Activated CD8-positive, alpha-beta memory T cell treated with anti-CD3 and anti-CD28 coated beads, Interleukin-2, amount 10 ng/mL, durations not matched to agents 7 days and 5 days (primary cell): ENCODE measurements at regions of chr7 and their contacts with region 1.

Region 1: DNA sequence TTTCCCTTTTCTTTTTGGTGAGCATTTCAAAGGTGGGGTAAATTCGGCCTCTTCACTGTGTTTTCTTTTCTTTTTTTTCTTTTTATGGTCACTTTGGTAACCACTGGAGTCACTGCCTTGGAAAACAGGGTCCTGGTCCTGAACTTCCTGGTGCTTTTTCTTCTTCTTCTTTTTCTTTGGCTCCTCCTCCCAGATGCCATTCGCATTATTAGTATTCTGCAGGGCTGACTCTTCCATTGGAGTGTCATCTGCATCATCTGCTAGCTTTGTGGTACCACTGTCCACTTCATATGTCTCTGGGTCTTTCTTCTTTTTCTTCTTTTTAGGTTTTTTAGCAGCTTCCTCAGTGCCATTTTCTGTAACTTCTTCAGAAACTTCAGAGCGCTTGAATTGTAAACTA is 10.5 kb downstream of the POLR1F start:
- DNase-seq: no peak
- ATAC-seq: no peak
- H3K4me3 Mint-ChIP-seq: no peak overlapping the region
- H3K27ac Mint-ChIP-seq: no peak overlapping the region
- H3K4me1 Mint-ChIP-seq: no peaks in the 10 kb centered on the region
- H3K27me3 Mint-ChIP-seq: no peaks in the 10 kb centered on the region

Region 2: DNA sequence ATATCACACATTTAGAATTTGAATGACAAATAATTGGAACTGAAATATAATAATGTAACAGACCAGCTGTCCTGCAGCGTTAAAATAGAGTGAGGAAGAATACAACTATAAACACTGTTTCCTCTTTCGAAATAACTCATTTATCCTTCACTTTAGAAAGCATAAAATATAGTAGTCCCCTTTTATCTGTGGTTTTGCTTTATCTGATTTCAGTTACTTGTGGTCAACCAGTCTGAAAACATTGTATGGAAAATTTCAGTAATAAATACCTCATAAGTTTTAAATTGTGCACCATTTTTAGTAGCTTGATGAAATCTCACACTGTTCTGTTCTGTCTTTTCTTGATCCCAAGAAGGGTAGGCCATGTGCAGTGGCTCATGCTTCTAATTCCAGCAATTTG is 21.2 kb before region 1 on chr7:
- CTCF ChIA-PET with region 1: no interaction called
- DNase-seq: no peak
- ATAC-seq: peak; percentile 36
- H3K4me3 Mint-ChIP-seq: no peak overlapping the region
- H3K27ac Mint-ChIP-seq: peak overlapping the region; percentile 27
- H3K4me1 Mint-ChIP-seq: peaks cover 10% of the 10 kb centered on the region
- H3K27me3 Mint-ChIP-seq: peaks cover 5% of the 10 kb centered on the region

Region 3: DNA sequence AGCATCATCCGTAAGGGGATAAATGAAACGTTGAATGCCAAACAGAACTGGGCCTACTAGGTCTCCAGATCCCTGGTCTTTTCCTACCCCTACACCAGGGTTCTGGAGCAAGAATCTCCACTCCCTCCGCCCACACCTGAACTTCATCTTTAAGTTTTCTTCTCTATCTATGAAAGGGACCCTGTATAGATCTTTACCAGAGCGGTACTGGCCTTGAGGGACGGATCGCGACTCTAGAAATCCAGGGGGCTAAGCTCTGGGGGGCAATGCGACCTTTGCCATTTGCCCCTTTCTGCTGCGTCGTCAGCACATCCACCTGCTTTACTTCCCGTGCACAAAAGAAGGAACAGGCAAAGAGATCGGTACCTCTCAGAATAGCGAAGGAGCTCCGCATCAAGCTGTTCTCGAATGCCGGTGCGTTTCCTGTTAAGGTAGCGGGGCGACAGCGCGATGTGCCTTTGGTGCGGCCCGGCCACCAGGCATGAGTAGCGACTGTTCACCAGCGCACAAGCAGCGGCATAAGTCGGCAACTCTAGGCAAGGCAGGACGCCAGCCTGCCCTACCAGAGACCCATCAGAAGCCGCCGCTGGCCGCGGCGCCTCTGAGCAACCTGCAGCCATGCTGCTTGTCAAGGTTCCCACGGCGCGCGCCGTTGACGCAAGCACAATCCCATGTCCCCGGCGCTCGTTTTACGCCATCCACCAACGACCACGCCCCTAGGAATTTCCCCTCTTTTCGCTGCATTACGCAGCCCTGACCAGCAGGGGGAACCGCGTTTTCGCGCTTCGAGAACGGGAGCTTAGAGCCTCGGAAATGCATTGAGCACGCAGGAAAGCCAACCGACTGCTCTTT is 10.3 kb after region 1 on chr7 and contains the start of gene POLR1F:
- CTCF ChIA-PET with region 1: interaction called, 16 read pairs
- DNase-seq: peak; percentile 94
- ATAC-seq: peak; percentile 98
- H3K4me3 Mint-ChIP-seq: peak within 1 kb of the TSS; percentile 96
- H3K27ac Mint-ChIP-seq: peak within 1 kb of the TSS; percentile 86
- H3K4me1 Mint-ChIP-seq: peaks cover 35% of the 10 kb centered on the region
- H3K27me3 Mint-ChIP-seq: no peaks in the 10 kb centered on the region
- total RNA-seq, gene POLR1F: 18.5 to 27.9 TPM